ENCODE measurements at regions of chr7 and their contacts with region 1.

Region 1: GRCh38 chr7:100065452-100066186 is 15.9 kb downstream of the ZNF3 start:
- DNase-seq: no peak
- ATAC-seq: peak; percentile 8 to 10; a peak in 1 of 6 replicates
- H3K4me3 ChIP-seq: no peak overlapping the region
- H3K27ac ChIP-seq: no peak overlapping the region
- H3K4me1 ChIP-seq: no peaks in the 10 kb centered on the region
- CTCF ChIP-seq: no peak
- EP300 ChIP-seq: no peak
- POLR2A ChIP-seq: no peak
- RAD21 ChIP-seq: no peak

Region 2: GRCh38 chr7:99374103-99375064 is 691.2 kb before region 1 on chr7 and contains the start of gene ARPC1B:
- CTCF ChIA-PET with region 1: no interaction called
- POLR2A ChIA-PET with region 1: no interaction called
- DNase-seq: peak; percentile 78 to 91
- ATAC-seq: peak; percentile 85 to 87
- H3K4me3 ChIP-seq: peak within 1 kb of the TSS; percentile 96
- H3K27ac ChIP-seq: peak within 1 kb of the TSS; percentile 95 to 98
- H3K4me1 ChIP-seq: peaks cover 39% of the 10 kb centered on the region
- CTCF ChIP-seq: no peak
- EP300 ChIP-seq: no peak
- POLR2A ChIP-seq: peak; percentile 86
- RAD21 ChIP-seq: no peak
- polyA plus RNA-seq, gene ARPC1B: 141 and 197 TPM in 2 replicates

Region 3: GRCh38 chr7:99504603-99505323 is 560.9 kb before region 1 on chr7 and contains the start of gene ZKSCAN5:
- CTCF ChIA-PET with region 1: no interaction called
- POLR2A ChIA-PET with region 1: no interaction called
- DNase-seq: peak; percentile 98
- ATAC-seq: peak; percentile 88 to 94
- H3K4me3 ChIP-seq: peak within 1 kb of the TSS; percentile 95
- H3K27ac ChIP-seq: peak within 1 kb of the TSS; percentile 94 to 97
- H3K4me1 ChIP-seq: peaks cover 16% of the 10 kb centered on the region; the same call in 2 of the 3 replicates
- CTCF ChIP-seq: no peak
- EP300 ChIP-seq: no peak
- POLR2A ChIP-seq: peak; percentile 86
- RAD21 ChIP-seq: no peak
- polyA plus RNA-seq, gene ZKSCAN5: 14.1 and 15.7 TPM in 2 replicates

Region 4: GRCh38 chr7:100049441-100050311 is 15.9 kb before region 1 on chr7 and contains the start of gene ZSCAN21:
- CTCF ChIA-PET with region 1: interaction called, 28 read pairs
- POLR2A ChIA-PET with region 1: interaction called, 7 read pairs
- DNase-seq: peak; percentile 79 to 88
- ATAC-seq: peak; percentile 94 to 96
- H3K4me3 ChIP-seq: peak within 1 kb of the TSS; percentile 85
- H3K27ac ChIP-seq: peak within 1 kb of the TSS; percentile 89 to 93
- H3K4me1 ChIP-seq: peaks cover 7% of the 10 kb centered on the region; the same call in 2 of the 3 replicates
- CTCF ChIP-seq: peak; percentile 20; the same call in 1 of the 3 replicates
- EP300 ChIP-seq: no peak
- POLR2A ChIP-seq: peak; percentile 87
- RAD21 ChIP-seq: no peak
- polyA plus RNA-seq, gene ZSCAN21: 17.9 and 18.3 TPM in 2 replicates